Pancreas (tissue), 10 donors: ENCODE measurements at regions of chr4 and their contacts with region 1.

Region 1: GRCh38 chr4:17189401-17189720 is 290.9 kb upstream of the LDB2 start:
- DNase-seq: no peak
- ATAC-seq: peak in 2 of 4 donors; percentile 43 to 48
- H3K4me3 ChIP-seq: no peak overlapping the region
- H3K27ac ChIP-seq: no peak overlapping the region
- H3K4me1 ChIP-seq: no peaks in the 10 kb centered on the region
- H3K27me3 ChIP-seq: peaks cover 0 to 4% (median 0%) of the 10 kb centered on the region in 4 donors
- CTCF ChIP-seq: no peak

Region 2: GRCh38 chr4:16914208-16914607 is 275.2 kb before region 1 on chr4:
- intact Hi-C with region 1: loop called in 1 of 3 experiments (anchors 5 kb)
- DNase-seq: no peak
- ATAC-seq: no peak
- H3K4me3 ChIP-seq: no peak overlapping the region
- H3K27ac ChIP-seq: no peak overlapping the region
- H3K4me1 ChIP-seq: no peaks in the 10 kb centered on the region
- H3K27me3 ChIP-seq: no peaks in the 10 kb centered on the region
- CTCF ChIP-seq: no peak